ENCODE measurements at regions of chr6 and their contacts with region 1.

Region 1: DNA sequence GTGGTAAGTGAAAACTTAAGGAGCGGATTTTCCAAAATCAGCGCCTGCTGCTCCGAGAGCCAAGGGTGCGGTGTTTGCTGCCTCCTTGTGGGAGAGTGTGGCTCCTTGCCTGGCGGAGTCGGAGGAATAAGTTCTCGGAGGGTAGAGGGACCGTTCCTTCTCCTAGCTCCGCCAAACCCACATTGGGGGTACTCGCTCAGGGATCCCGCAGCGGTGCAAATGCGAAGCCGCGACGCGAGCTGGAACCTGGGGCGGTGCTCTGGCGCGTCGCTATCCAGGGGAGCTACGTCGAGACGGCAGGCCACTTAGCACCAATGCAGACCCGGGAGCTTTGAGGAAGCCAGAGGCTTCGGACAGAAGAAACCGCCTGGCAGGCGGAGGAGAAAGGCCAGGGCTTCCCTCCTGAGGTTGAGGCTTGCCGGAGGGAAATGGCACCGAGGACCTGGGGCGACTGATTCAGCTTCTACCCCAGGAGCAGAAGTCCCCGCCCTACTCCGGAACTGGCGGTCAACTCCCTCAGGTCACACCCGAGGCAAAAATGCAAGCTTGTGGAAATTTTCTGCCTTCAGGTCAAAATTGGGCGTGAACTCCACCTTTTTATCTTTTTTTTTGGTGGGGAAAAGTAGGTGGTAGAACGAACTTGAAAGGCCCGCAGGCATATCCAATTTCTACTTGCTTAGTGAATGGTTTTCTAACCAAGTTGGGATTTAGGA is 5.7 kb upstream of the DDX43 start:
- DNase-seq: peak; percentile 43 to 64 (median 52)
- H3K4me3 ChIP-seq: peak overlapping the region; percentile 57 to 71
- H3K4me3 Mint-ChIP-seq: peak overlapping the region; percentile 86 to 88 (median 87)
- H3K27ac ChIP-seq: peak overlapping the region; percentile 65
- H3K27ac Mint-ChIP-seq: peak overlapping the region; percentile 82 to 93 (median 90)
- H3K4me1 ChIP-seq: peaks cover 30% of the 10 kb centered on the region
- H3K4me1 Mint-ChIP-seq: peaks cover 17 to 40% (median 28%) of the 10 kb centered on the region in 4 donors
- H3K27me3 ChIP-seq: no peaks in the 10 kb centered on the region
- H3K27me3 Mint-ChIP-seq: no peaks in the 10 kb centered on the region

Region 2: GRCh38 chr6:73285674-73286283 is 103.2 kb before region 1 on chr6:
- CTCF ChIA-PET with region 1: interaction called, 15 read pairs
- POLR2A ChIA-PET with region 1: interaction called, 3 read pairs
- intact Hi-C with region 1: loop called (anchors 2 kb)
- DNase-seq: peak in 3 of 5 donors; percentile 8 to 13 (median 12)
- H3K4me3 ChIP-seq: no peak overlapping the region
- H3K4me3 Mint-ChIP-seq: no peak overlapping the region
- H3K27ac ChIP-seq: no peak overlapping the region
- H3K27ac Mint-ChIP-seq: no peak overlapping the region
- H3K4me1 ChIP-seq: no peaks in the 10 kb centered on the region
- H3K4me1 Mint-ChIP-seq: no peaks in the 10 kb centered on the region
- H3K27me3 ChIP-seq: no peaks in the 10 kb centered on the region
- H3K27me3 Mint-ChIP-seq: no peaks in the 10 kb centered on the region

Region 3: GRCh38 chr6:73418081-73418741 is 29.3 kb after region 1 on chr6:
- CTCF ChIA-PET with region 1: interaction called, 18 read pairs
- POLR2A ChIA-PET with region 1: interaction called, 27 read pairs
- intact Hi-C with region 1: loop called (anchors 1 kb)
- DNase-seq: no peak
- H3K4me3 ChIP-seq: no peak overlapping the region
- H3K4me3 Mint-ChIP-seq: peak overlapping the region in 3 of 8 donors; percentile 15 to 61 (median 43)
- H3K27ac ChIP-seq: no peak overlapping the region
- H3K27ac Mint-ChIP-seq: peak overlapping the region; percentile 35 to 90 (median 84)
- H3K4me1 ChIP-seq: peaks cover 26% of the 10 kb centered on the region
- H3K4me1 Mint-ChIP-seq: peaks cover 21 to 29% (median 22%) of the 10 kb centered on the region in 4 donors
- H3K27me3 ChIP-seq: no peaks in the 10 kb centered on the region
- H3K27me3 Mint-ChIP-seq: no peaks in the 10 kb centered on the region

Region 4: DNA sequence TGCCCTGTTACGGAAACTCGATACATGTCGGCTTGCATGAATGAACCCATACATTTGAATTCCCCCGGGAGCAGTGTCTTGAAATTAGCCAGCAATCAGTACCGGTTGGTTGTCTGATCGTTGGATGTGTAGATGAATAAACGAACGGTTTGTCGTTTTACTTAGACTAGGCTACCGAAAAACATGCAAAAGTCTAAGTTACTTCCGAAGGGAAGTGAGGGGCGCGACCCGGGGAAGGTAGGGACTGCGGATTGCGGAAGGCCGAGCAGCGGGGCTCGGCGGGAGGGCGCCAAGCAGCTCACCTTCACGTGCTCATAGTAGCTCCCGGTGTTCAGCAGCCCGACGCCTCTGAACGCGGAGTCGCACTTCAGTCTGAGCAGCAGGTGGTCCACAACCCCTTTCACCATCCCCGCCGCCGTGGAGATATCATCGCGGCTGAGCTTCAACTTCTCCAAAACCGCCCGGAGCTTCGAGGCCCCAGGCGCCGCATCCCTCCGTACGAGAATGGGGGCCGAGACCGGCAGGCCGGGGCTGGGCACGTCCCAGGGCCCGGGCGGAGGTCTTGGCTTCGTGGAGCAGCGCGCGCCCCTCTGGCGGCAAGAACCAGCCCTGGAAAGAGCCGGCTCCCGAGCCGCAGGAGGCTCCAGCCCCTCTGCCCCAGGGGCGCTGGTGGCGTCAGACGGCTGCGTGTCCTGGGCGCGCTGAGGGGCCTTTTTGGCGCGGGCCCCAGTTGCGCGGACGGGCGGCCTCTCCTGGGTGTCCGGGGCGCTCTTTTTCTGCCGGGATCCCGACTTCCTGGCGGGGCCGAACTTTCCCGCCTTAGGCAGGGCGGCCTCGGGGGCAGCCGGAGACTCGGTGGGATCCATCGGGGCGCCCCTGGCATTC is 62.5 kb after region 1 on chr6:
- CTCF ChIA-PET with region 1: interaction called, 11 read pairs
- POLR2A ChIA-PET with region 1: interaction called, 29 read pairs
- intact Hi-C with region 1: loop called (anchors 2 kb)
- DNase-seq: peak; percentile 41 to 64 (median 49)
- H3K4me3 ChIP-seq: peak overlapping the region; percentile 97 to 98
- H3K4me3 Mint-ChIP-seq: peak overlapping the region; percentile 90 to 99 (median 97)
- H3K27ac ChIP-seq: peak overlapping the region; percentile 92
- H3K27ac Mint-ChIP-seq: peak overlapping the region; percentile 88 to 97 (median 92)
- H3K4me1 ChIP-seq: peaks cover 32% of the 10 kb centered on the region
- H3K4me1 Mint-ChIP-seq: peaks cover 14 to 44% (median 24%) of the 10 kb centered on the region in 4 donors
- H3K27me3 ChIP-seq: no peaks in the 10 kb centered on the region
- H3K27me3 Mint-ChIP-seq: no peaks in the 10 kb centered on the region

Measured in CD4-positive, alpha-beta memory T cell (primary cell).